CD4-positive, alpha-beta memory T cell (primary cell): ENCODE measurements at regions of chr18 and their contacts with region 1.

Region 1: DNA sequence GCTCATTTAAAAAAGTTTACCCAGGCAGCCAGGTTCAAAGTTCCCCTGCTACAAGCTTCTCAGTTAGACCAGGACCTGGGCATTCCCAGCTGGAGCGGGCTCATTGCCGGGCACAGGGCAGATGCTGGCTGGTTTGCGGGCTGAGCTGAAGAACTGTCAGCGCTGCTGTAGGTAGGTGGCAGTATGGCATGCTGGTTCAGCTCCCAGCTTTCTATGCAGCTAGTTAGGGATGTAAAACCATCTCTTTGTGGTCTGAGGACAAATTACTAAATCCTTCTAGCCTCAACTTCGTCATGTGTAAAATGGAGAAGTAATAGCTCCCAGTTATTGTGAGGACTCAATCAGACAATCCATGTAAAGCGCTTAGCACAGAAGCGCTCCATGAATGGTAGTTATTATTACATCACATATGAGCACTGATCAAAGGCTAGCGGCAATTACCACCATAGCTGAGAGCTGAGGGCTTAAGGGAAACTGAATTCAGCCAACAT is 2.4 kb upstream of the LDLRAD4 start:
- DNase-seq: peak; percentile 52 to 64 (median 59)
- H3K4me3 ChIP-seq: peak overlapping the region in 1 of 2 donors; percentile 61
- H3K4me3 Mint-ChIP-seq: peak overlapping the region; percentile 87 to 97 (median 92)
- H3K27ac ChIP-seq: no peak overlapping the region
- H3K27ac Mint-ChIP-seq: peak overlapping the region; percentile 53 to 98 (median 90)
- H3K4me1 ChIP-seq: peaks cover 26% of the 10 kb centered on the region
- H3K4me1 Mint-ChIP-seq: peaks cover 13 to 29% (median 24%) of the 10 kb centered on the region in 4 donors
- H3K27me3 ChIP-seq: no peaks in the 10 kb centered on the region
- H3K27me3 Mint-ChIP-seq: peaks cover 4 to 30% of the 10 kb centered on the region in 2 donors

Region 2: GRCh38 chr18:13375302-13376255 is 159.4 kb after region 1 on chr18:
- CTCF ChIA-PET with region 1: interaction called, 26 read pairs
- POLR2A ChIA-PET with region 1: interaction called, 12 read pairs
- intact Hi-C with region 1: loop called (anchors 1 kb)
- DNase-seq: peak; percentile 55 to 92 (median 65)
- H3K4me3 ChIP-seq: peak overlapping the region in 1 of 2 donors; percentile 41
- H3K4me3 Mint-ChIP-seq: peak overlapping the region; percentile 75 to 91 (median 80)
- H3K27ac ChIP-seq: peak overlapping the region; percentile 76
- H3K27ac Mint-ChIP-seq: peak overlapping the region; percentile 90 to 100 (median 99)
- H3K4me1 ChIP-seq: peaks cover 86% of the 10 kb centered on the region
- H3K4me1 Mint-ChIP-seq: peaks cover 52 to 84% (median 71%) of the 10 kb centered on the region in 4 donors
- H3K27me3 ChIP-seq: no peaks in the 10 kb centered on the region
- H3K27me3 Mint-ChIP-seq: no peaks in the 10 kb centered on the region

Region 3: DNA sequence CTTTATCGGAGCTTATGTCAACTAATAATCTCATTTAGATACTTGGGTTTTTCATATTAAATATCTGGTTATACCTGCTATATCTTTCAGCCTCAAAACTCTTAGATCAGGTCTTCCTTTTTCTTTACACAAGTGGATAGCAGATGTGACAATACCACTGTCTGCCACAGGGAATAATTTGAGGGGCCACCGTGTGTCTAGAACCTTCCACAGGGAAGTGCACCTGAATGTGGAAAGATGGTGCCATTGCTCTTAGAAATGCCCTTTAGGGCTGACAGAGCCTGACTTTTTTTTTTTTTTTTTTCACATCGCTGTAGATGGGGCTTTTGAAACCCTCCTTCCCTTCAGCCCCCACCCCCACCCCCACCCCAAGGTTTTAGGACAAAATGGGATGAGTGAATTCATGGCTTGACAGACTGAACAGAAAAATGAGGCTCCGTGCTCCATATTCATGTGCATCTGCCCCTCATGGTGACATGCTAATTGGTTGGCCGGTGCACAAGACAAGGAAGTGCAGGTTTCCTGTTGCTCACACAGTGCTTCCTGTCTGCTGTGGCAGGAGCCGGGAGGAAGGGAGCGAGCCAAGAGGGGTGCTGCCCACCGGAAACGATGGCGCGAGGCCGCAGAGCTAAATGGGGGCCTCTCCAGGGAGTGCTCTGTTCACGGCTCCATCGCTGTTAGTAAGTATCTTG is 248.4 kb after region 1 on chr18:
- CTCF ChIA-PET with region 1: interaction called, 10 read pairs
- POLR2A ChIA-PET with region 1: interaction called, 3 read pairs
- intact Hi-C with region 1: loop called (anchors 1 kb)
- DNase-seq: peak; percentile 56 to 83 (median 65)
- H3K4me3 ChIP-seq: peak overlapping the region; percentile 41 to 67
- H3K4me3 Mint-ChIP-seq: peak overlapping the region; percentile 86 to 96 (median 94)
- H3K27ac ChIP-seq: peak overlapping the region; percentile 47
- H3K27ac Mint-ChIP-seq: peak overlapping the region; percentile 88 to 97 (median 93)
- H3K4me1 ChIP-seq: peaks cover 60% of the 10 kb centered on the region
- H3K4me1 Mint-ChIP-seq: peaks cover 52 to 80% (median 63%) of the 10 kb centered on the region in 4 donors
- H3K27me3 ChIP-seq: no peaks in the 10 kb centered on the region
- H3K27me3 Mint-ChIP-seq: no peaks in the 10 kb centered on the region

Region 4: GRCh38 chr18:13477147-13477683 is 261.1 kb after region 1 on chr18:
- CTCF ChIA-PET with region 1: no interaction called
- POLR2A ChIA-PET with region 1: no interaction called
- intact Hi-C with region 1: no loop called
- DNase-seq: no peak
- H3K4me3 ChIP-seq: no peak overlapping the region
- H3K4me3 Mint-ChIP-seq: no peak overlapping the region
- H3K27ac ChIP-seq: no peak overlapping the region
- H3K27ac Mint-ChIP-seq: peak overlapping the region in 5 of 7 donors; percentile 4 to 62 (median 27)
- H3K4me1 ChIP-seq: no peaks in the 10 kb centered on the region
- H3K4me1 Mint-ChIP-seq: peaks cover 21 to 56% (median 31%) of the 10 kb centered on the region in 4 donors
- H3K27me3 ChIP-seq: no peaks in the 10 kb centered on the region
- H3K27me3 Mint-ChIP-seq: no peaks in the 10 kb centered on the region

Region 5: DNA sequence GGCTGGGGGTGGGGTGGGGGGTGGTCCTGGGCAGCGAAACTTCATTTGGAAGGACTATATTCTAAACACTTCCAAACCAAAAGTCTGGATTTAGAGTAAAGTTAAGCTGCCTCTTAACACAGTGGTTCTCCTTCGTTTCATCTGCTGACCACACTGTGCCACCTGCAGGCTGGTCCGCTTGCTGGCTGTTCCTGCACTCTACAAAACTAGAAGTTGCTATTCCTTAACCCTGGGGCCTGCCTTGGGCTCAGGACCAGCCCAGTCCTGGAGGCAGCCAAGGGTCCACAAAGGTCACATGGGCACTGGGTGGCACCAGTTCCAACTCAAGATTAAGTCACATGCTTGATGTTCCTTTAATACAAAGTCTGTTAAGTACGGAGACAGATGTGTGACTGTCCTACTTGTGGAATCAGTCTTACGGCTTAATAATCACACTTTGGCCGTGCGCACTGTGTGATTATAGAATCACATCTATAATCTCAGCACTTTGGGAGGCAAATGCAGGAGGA is 314.8 kb after region 1 on chr18:
- CTCF ChIA-PET with region 1: interaction called, 46 read pairs
- POLR2A ChIA-PET with region 1: interaction called, 3 read pairs
- intact Hi-C with region 1: loop called (anchors 1 kb)
- DNase-seq: peak in 1 of 5 donors; percentile 11
- H3K4me3 ChIP-seq: no peak overlapping the region
- H3K4me3 Mint-ChIP-seq: no peak overlapping the region
- H3K27ac ChIP-seq: no peak overlapping the region
- H3K27ac Mint-ChIP-seq: peak overlapping the region in 1 of 7 donors; percentile 76
- H3K4me1 ChIP-seq: no peaks in the 10 kb centered on the region
- H3K4me1 Mint-ChIP-seq: peaks cover 14 to 35% (median 18%) of the 10 kb centered on the region in 4 donors
- H3K27me3 ChIP-seq: no peaks in the 10 kb centered on the region
- H3K27me3 Mint-ChIP-seq: no peaks in the 10 kb centered on the region

Region 6: GRCh38 chr18:13629841-13630715 is 413.9 kb after region 1 on chr18:
- CTCF ChIA-PET with region 1: interaction called, 45 read pairs
- POLR2A ChIA-PET with region 1: no interaction called
- intact Hi-C with region 1: loop called (anchors 1 kb)
- DNase-seq: peak in 4 of 5 donors; percentile 44 to 51 (median 46)
- H3K4me3 ChIP-seq: no peak overlapping the region
- H3K4me3 Mint-ChIP-seq: peak overlapping the region in 1 of 8 donors; percentile 16
- H3K27ac ChIP-seq: no peak overlapping the region
- H3K27ac Mint-ChIP-seq: peak overlapping the region in 6 of 7 donors; percentile 13 to 76 (median 64)
- H3K4me1 ChIP-seq: no peaks in the 10 kb centered on the region
- H3K4me1 Mint-ChIP-seq: peaks cover 9 to 14% (median 13%) of the 10 kb centered on the region in 4 donors
- H3K27me3 ChIP-seq: no peaks in the 10 kb centered on the region
- H3K27me3 Mint-ChIP-seq: no peaks in the 10 kb centered on the region

Region 7: DNA sequence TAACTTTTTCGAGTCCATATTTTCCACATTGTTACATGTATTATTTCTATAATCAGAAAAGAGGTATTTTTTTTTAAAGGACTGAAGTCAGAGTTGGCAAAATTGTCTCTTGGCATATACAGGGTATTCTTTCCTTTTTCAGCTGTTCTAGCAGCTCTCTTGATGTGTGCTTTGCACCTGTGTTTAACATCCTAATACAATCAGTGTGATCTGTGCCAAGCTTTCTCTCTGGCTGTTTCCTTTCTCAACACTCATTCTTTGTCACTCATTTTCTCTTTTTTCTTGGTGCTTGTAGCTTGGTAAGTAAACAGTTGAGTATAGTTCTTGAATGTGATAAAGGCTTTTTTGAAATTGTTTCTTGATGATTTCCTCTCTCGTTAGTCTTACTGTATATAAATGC is 519.5 kb after region 1 on chr18:
- CTCF ChIA-PET with region 1: interaction called, 13 read pairs
- POLR2A ChIA-PET with region 1: no interaction called
- intact Hi-C with region 1: no loop called
- DNase-seq: no peak
- H3K4me3 ChIP-seq: no peak overlapping the region
- H3K4me3 Mint-ChIP-seq: no peak overlapping the region
- H3K27ac ChIP-seq: no peak overlapping the region
- H3K27ac Mint-ChIP-seq: peak overlapping the region in 2 of 7 donors; percentile 19 to 35
- H3K4me1 ChIP-seq: peaks cover 2% of the 10 kb centered on the region
- H3K4me1 Mint-ChIP-seq: peaks cover 8 to 13% (median 10%) of the 10 kb centered on the region in 4 donors
- H3K27me3 ChIP-seq: no peaks in the 10 kb centered on the region
- H3K27me3 Mint-ChIP-seq: no peaks in the 10 kb centered on the region